Natural killer cell (primary cell): ENCODE measurements at regions of chr15 and their contacts with region 1.

Region 1: DNA sequence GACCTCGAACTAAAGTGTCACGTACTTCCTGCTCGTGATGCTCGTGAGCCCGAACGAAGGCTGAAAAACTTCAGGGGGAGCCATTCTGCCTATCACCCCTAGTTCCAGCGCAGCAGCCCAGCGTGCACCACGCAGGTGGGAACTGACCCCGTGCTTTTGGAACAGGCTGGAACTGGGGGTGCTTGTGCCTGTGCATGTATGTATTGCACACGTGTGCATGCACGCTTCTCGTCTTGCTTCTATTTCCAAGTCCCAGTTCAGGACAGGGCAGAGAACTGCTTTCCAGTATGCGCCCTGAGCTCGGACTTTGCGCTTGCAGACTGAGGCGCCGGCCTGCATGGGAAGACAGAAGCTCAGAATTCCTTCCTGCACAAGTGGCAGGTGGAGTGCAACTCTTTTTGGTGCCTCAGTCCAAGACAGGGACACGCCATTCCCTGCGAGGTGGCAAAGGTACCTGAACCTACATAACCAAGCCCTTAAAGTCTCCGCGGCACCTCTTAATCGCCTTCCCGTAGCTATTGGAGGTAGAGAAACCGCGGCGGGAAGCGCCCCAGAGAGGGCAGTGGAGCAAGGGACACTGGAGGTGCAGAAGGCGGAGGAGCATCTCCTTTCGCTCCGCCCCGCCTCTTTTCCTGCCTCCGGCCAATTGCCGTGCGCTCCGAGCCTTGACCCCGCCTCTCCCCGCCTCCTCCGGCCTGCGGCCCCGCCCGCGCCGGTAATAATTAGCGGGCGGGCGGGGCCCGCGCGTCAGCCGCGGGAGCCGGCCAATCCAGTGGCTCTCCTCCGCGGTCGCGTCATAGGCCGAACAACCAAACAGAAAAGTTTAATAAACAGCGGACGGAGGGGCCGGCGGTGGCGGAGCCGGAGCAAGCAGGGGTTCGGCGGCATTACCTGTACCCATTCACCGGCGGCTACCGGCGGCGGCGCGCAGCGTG is at the start of gene ZFAND6:
- DNase-seq: peak; percentile 97
- ATAC-seq: peak; percentile 90 to 98 (median 90)
- H3K4me3 ChIP-seq: peak within 1 kb of the TSS; percentile 87
- H3K4me3 Mint-ChIP-seq: peak within 1 kb of the TSS; percentile 97
- H3K27ac ChIP-seq: peak within 1 kb of the TSS; percentile 91
- H3K27ac Mint-ChIP-seq: peak within 1 kb of the TSS; percentile 92 to 97
- H3K4me1 ChIP-seq: peaks cover 12% of the 10 kb centered on the region
- H3K4me1 Mint-ChIP-seq: peaks cover 28 to 33% of the 10 kb centered on the region in 2 donors
- H3K27me3 ChIP-seq: peaks cover 2% of the 10 kb centered on the region
- H3K27me3 Mint-ChIP-seq: no peaks in the 10 kb centered on the region
- CTCF ChIP-seq: no peak
- total RNA-seq, gene ZFAND6: 145 to 150 (median 148) TPM

Region 2: GRCh38 chr15:80072285-80072994 is 13.3 kb after region 1 on chr15:
- intact Hi-C with region 1: loop called (anchors 1 kb)
- DNase-seq: peak in 1 of 2 donors; percentile 72
- ATAC-seq: peak; percentile 92 to 98 (median 97)
- H3K4me3 ChIP-seq: peak overlapping the region; percentile 18
- H3K4me3 Mint-ChIP-seq: peak overlapping the region; percentile 89
- H3K27ac ChIP-seq: no peak overlapping the region
- H3K27ac Mint-ChIP-seq: peak overlapping the region; percentile 77 to 86
- H3K4me1 ChIP-seq: no peaks in the 10 kb centered on the region
- H3K4me1 Mint-ChIP-seq: peaks cover 54 to 64% of the 10 kb centered on the region in 2 donors
- H3K27me3 ChIP-seq: no peaks in the 10 kb centered on the region
- H3K27me3 Mint-ChIP-seq: no peaks in the 10 kb centered on the region
- CTCF ChIP-seq: no peak

Region 3: GRCh38 chr15:80100247-80100646 is 41.1 kb after region 1 on chr15:
- intact Hi-C with region 1: loop called (anchors 5 kb)
- DNase-seq: no peak
- ATAC-seq: no peak
- H3K4me3 ChIP-seq: no peak overlapping the region
- H3K4me3 Mint-ChIP-seq: no peak overlapping the region
- H3K27ac ChIP-seq: no peak overlapping the region
- H3K27ac Mint-ChIP-seq: peak overlapping the region in 1 of 2 donors; percentile 33
- H3K4me1 ChIP-seq: peaks cover 5% of the 10 kb centered on the region
- H3K4me1 Mint-ChIP-seq: peaks cover 37 to 47% of the 10 kb centered on the region in 2 donors
- H3K27me3 ChIP-seq: no peaks in the 10 kb centered on the region
- H3K27me3 Mint-ChIP-seq: no peaks in the 10 kb centered on the region
- CTCF ChIP-seq: no peak

Region 4: DNA sequence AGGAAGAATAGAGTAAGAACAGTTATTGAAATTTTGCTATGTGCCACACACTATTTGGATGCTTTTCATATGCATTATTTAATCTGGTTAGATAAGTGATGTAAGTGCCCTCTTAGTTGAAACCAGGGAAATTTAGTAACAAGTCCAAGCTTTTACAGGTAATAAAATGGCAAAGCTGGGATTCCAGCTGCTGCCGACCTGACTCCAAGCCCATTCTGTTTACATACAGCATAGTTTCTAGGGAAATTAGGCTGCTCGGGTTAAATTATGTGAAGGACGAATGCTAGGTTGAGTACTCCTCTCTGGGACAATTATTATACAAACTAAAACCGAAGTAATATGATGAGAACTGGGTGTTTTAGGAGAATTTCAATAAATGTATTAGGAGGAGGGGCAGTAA is 55.0 kb after region 1 on chr15:
- intact Hi-C with region 1: no loop called
- DNase-seq: no peak
- ATAC-seq: no peak
- H3K4me3 ChIP-seq: no peak overlapping the region
- H3K4me3 Mint-ChIP-seq: no peak overlapping the region
- H3K27ac ChIP-seq: no peak overlapping the region
- H3K27ac Mint-ChIP-seq: no peak overlapping the region
- H3K4me1 ChIP-seq: no peaks in the 10 kb centered on the region
- H3K4me1 Mint-ChIP-seq: peaks cover 42 to 48% of the 10 kb centered on the region in 2 donors
- H3K27me3 ChIP-seq: no peaks in the 10 kb centered on the region
- H3K27me3 Mint-ChIP-seq: no peaks in the 10 kb centered on the region
- CTCF ChIP-seq: no peak

Region 5: GRCh38 chr15:80152180-80152845 is 93.2 kb after region 1 on chr15:
- intact Hi-C with region 1: loop called (anchors 2 kb)
- DNase-seq: peak; percentile 49 to 89
- ATAC-seq: peak; percentile 68 to 86 (median 76)
- H3K4me3 ChIP-seq: peak overlapping the region; percentile 86
- H3K4me3 Mint-ChIP-seq: peak overlapping the region; percentile 87
- H3K27ac ChIP-seq: peak overlapping the region; percentile 65
- H3K27ac Mint-ChIP-seq: peak overlapping the region; percentile 81 to 88
- H3K4me1 ChIP-seq: peaks cover 29% of the 10 kb centered on the region
- H3K4me1 Mint-ChIP-seq: peaks cover 21 to 25% of the 10 kb centered on the region in 2 donors
- H3K27me3 ChIP-seq: no peaks in the 10 kb centered on the region
- H3K27me3 Mint-ChIP-seq: no peaks in the 10 kb centered on the region
- CTCF ChIP-seq: no peak

Region 6: DNA sequence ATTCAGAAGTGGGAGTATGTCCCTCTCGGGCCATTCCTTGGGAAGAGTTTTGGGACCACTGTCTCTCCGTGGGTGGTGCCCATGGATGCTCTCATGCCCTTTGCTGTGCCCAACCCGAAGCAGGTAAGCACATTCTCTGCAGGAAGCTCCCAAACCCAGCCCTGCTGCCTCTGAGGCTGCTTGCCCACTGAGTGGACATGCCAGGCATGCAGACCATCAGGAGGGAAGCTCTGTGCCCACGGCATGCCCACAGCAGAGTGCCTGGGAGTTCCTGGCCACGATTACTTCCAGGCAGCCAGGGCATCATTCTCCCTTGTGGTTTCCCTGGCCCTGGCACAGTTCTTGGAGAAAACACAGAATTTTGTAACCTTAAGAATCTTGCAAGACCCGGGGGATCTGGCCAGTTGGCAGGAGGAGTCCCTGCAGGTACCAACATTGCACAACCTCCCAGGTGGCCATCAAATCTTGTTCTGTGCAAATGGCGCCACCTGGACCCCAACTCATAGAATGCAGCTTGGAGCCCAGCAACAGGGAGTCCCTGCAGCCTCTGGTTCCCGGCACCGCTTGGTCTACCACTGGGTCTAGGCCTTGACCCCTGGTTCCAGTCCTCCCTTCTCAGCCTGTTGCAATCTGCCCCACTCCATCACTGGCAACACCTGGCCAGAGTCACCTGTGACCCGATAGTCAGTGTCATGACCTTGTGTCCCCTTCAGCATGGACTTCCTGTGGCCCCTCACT is 114.1 kb after region 1 on chr15:
- intact Hi-C with region 1: loop called (anchors 5 kb)
- DNase-seq: peak; percentile 60 to 79
- ATAC-seq: peak; percentile 77 to 90 (median 77)
- H3K4me3 ChIP-seq: no peak overlapping the region
- H3K4me3 Mint-ChIP-seq: no peak overlapping the region
- H3K27ac ChIP-seq: no peak overlapping the region
- H3K27ac Mint-ChIP-seq: no peak overlapping the region
- H3K4me1 ChIP-seq: no peaks in the 10 kb centered on the region
- H3K4me1 Mint-ChIP-seq: peaks cover 0 to 12% of the 10 kb centered on the region in 2 donors
- H3K27me3 ChIP-seq: no peaks in the 10 kb centered on the region
- H3K27me3 Mint-ChIP-seq: no peaks in the 10 kb centered on the region
- CTCF ChIP-seq: peak; percentile 70